ENCODE measurements at regions of chr2 and their contacts with region 1.

Region 1: DNA sequence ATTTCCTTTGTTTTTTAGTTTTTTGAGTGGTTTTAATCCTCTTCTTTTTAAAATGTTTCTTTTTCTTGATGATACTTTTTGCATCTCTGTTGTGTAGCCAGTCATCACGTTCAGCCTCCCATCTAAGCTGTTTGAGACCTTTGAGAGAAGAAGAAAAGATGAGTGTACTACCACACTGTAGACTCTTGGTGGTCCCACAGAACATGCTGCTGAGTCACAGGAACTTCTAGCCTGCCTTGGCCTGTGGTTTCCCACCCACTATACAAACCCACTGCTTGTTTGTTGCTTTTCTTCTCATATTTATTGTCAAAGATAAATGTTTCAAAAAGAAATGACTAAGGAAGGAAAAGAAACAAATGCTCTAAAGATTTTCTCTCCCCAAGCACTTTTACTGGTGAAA is 5.5 kb downstream of the CEBPZOS start:
- DNase-seq: peak in 11 of 35 experiments; percentile 3 to 43 (median 10)
- ATAC-seq: peak in 3 of 4 experiments; percentile 53 to 73 (median 59)
- H3K4me3 ChIP-seq: no peak overlapping the region
- H3K4me3 Mint-ChIP-seq: no peak overlapping the region
- H3K27ac ChIP-seq: no peak overlapping the region
- H3K27ac Mint-ChIP-seq: peak overlapping the region; percentile 24 to 75
- H3K4me1 ChIP-seq: peaks cover 4 to 21% of the 10 kb centered on the region in 2 experiments
- H3K4me1 Mint-ChIP-seq: peaks cover 39 to 59% (median 45%) of the 10 kb centered on the region in 3 donors
- H3K27me3 ChIP-seq: no peaks in the 10 kb centered on the region
- H3K27me3 Mint-ChIP-seq: no peaks in the 10 kb centered on the region

Region 2: DNA sequence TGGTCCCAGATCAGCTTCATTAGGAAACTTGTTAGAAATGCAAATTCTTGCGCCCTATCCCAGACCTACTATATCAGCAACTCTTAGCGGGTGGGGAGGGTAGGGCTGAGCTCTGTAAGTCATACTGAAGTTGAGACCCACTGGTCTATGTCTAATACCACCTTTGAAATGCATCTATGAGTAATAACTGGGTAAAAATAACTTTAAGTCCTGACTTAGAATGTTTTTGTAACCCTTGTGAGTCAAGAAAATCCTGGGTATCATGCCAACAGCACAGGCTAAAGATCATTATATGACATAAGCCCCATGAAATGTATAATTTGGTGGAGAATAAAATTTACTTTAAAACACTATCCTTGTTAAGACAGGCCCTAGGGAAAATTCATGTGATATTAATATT is 81.4 kb after region 1 on chr2:
- CTCF ChIA-PET with region 1: no interaction called
- POLR2A ChIA-PET with region 1: no interaction called
- DNase-seq: no peak
- ATAC-seq: no peak
- H3K4me3 ChIP-seq: no peak overlapping the region
- H3K4me3 Mint-ChIP-seq: no peak overlapping the region
- H3K27ac ChIP-seq: no peak overlapping the region
- H3K27ac Mint-ChIP-seq: no peak overlapping the region
- H3K4me1 ChIP-seq: no peaks in the 10 kb centered on the region
- H3K4me1 Mint-ChIP-seq: no peaks in the 10 kb centered on the region
- H3K27me3 ChIP-seq: no peaks in the 10 kb centered on the region
- H3K27me3 Mint-ChIP-seq: no peaks in the 10 kb centered on the region

Region 3: DNA sequence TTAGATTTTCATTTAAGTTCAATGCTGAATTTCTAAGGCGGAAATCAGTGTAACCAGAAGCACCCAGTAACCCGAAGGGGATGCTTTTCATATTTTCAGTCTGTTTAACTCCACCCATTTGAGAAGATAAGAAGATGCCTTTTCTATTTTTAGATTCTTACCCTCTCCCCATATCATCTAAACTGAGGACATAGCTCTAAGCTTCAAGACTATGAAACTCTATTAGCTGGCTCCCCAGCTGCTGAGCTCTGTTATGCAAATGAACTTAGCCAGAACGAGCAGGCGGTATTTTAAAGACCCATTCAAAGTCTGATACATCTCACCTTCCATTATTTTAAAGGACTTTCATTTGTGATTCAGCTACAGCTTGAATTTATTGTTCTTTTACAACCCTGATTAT is 453.2 kb after region 1 on chr2:
- CTCF ChIA-PET with region 1: no interaction called
- POLR2A ChIA-PET with region 1: interaction called in 1 of 2 experiments, 11 read pairs
- DNase-seq: peak in 1 of 35 experiments; percentile 29
- ATAC-seq: peak; percentile 41 to 65 (median 45)
- H3K4me3 ChIP-seq: no peak overlapping the region
- H3K4me3 Mint-ChIP-seq: peak overlapping the region; percentile 37 to 70 (median 63)
- H3K27ac ChIP-seq: peak overlapping the region; percentile 48
- H3K27ac Mint-ChIP-seq: peak overlapping the region; percentile 84 to 90
- H3K4me1 ChIP-seq: peaks cover 33 to 77% of the 10 kb centered on the region in 2 experiments
- H3K4me1 Mint-ChIP-seq: peaks cover 95 to 99% (median 97%) of the 10 kb centered on the region in 3 donors
- H3K27me3 ChIP-seq: no peaks in the 10 kb centered on the region
- H3K27me3 Mint-ChIP-seq: no peaks in the 10 kb centered on the region

Measured in T-cell (primary cell).